Posterior vena cava (tissue), 2 donors: ENCODE measurements at regions of chr9 and their contacts with region 1.

Region 1: GRCh38 chr9:22374051-22374450 is 72.6 kb upstream of the DMRTA1 start:
- DNase-seq: no peak

Region 2: DNA sequence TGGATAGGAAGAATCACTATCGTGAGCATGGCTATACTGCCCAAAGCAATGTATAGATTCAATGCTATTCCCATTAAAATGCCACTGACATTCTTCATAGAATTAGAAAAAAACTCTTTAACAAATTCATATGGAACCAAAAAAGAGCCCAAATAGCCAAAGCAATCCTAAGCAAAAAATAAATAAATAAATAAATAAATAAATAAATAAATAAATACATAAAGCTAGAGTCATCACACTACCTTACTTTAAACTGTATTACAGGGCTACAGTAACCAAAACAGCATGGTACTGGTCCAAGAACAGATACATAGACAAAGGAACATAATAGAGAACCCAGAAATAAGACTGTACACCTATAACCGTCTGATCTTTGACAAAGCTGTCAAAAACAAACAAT is 184.6 kb before region 1 on chr9:
- intact Hi-C with region 1: loop called in 1 of 2 experiments (anchors 5 kb)
- DNase-seq: no peak

Region 3: GRCh38 chr9:22265038-22265437 is 109.0 kb before region 1 on chr9:
- intact Hi-C with region 1: loop called in 1 of 2 experiments (anchors 10 kb)
- DNase-seq: no peak